T-cell (primary cell): ENCODE measurements at regions of chr1 and their contacts with region 1.

Region 1: GRCh38 chr1:246002725-246003441 is 504.2 kb downstream of the SMYD3 start:
- DNase-seq: peak; percentile 42 to 88 (median 77)
- ATAC-seq: peak in 3 of 4 experiments; percentile 37 to 65 (median 56)
- H3K4me3 ChIP-seq: no peak overlapping the region
- H3K4me3 Mint-ChIP-seq: no peak overlapping the region
- H3K27ac ChIP-seq: no peak overlapping the region
- H3K27ac Mint-ChIP-seq: no peak overlapping the region
- H3K4me1 ChIP-seq: no peaks in the 10 kb centered on the region
- H3K4me1 Mint-ChIP-seq: no peaks in the 10 kb centered on the region
- H3K27me3 ChIP-seq: no peaks in the 10 kb centered on the region
- H3K27me3 Mint-ChIP-seq: no peaks in the 10 kb centered on the region

Region 2: GRCh38 chr1:245153081-245153551 is 849.8 kb before region 1 on chr1:
- CTCF ChIA-PET with region 1: interaction called, 4 to 19 read pairs
- POLR2A ChIA-PET with region 1: no interaction called
- DNase-seq: peak; percentile 15 to 77 (median 50)
- ATAC-seq: peak in 3 of 4 experiments; percentile 23 to 49 (median 29)
- H3K4me3 ChIP-seq: peak overlapping the region; percentile 42 to 79
- H3K4me3 Mint-ChIP-seq: peak overlapping the region; percentile 76 to 84 (median 79)
- H3K27ac ChIP-seq: no peak overlapping the region
- H3K27ac Mint-ChIP-seq: no peak overlapping the region
- H3K4me1 ChIP-seq: peaks cover 3 to 38% of the 10 kb centered on the region in 2 experiments
- H3K4me1 Mint-ChIP-seq: peaks cover 22 to 31% (median 27%) of the 10 kb centered on the region in 3 donors
- H3K27me3 ChIP-seq: peaks cover 0 to 50% of the 10 kb centered on the region in 2 experiments
- H3K27me3 Mint-ChIP-seq: peaks cover 53 to 71% of the 10 kb centered on the region in 2 donors

Region 3: GRCh38 chr1:245888809-245889208 is 114.1 kb before region 1 on chr1:
- CTCF ChIA-PET with region 1: interaction called, 7 to 25 read pairs
- POLR2A ChIA-PET with region 1: no interaction called
- DNase-seq: peak in 10 of 35 experiments; percentile 3 to 55 (median 6)
- ATAC-seq: no peak
- H3K4me3 ChIP-seq: no peak overlapping the region
- H3K4me3 Mint-ChIP-seq: no peak overlapping the region
- H3K27ac ChIP-seq: no peak overlapping the region
- H3K27ac Mint-ChIP-seq: no peak overlapping the region
- H3K4me1 ChIP-seq: no peaks in the 10 kb centered on the region
- H3K4me1 Mint-ChIP-seq: no peaks in the 10 kb centered on the region
- H3K27me3 ChIP-seq: no peaks in the 10 kb centered on the region
- H3K27me3 Mint-ChIP-seq: no peaks in the 10 kb centered on the region